ENCODE measurements at regions of chr11 and their contacts with region 1.

Region 1: DNA sequence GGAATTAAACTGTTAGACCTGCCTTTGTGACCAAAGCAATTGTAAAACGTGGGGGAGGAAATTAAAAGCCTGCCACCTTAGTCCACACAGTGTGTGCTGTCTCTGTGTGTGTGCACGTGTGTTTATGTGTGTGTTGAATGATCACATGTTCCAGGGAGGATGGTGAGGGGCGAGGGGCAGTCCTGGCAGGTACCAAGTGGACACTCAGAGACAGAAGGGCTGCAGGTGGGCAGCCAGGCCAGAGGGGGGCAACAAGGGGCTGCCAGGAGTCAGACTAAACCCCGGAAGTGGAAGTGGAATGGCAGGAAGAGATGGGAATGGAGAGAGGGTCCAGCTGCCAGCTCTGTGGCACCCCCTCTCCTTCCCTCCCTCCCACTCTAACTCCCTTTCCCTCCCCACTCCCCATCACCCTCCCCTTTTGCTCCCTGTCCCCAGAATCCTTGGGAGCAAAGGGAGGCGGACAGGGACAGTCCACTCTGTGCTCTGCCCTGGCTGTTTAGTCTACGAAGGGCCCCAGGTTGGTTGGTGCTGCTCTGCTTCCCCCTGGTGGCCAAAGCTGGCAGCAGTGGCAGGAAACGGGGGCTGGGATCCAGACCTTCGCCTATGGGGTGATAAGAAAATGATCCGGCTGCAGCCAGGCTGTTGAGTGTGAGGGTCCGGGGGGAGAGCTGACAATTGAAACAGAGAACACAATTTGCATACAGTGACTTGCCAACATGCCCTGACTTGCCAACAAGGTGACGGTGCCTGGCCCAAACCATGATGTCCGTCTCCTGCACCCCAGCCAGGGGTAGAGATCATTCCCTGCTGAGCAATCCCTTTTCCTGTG is 24.4 kb downstream of the P2RY2 start:
- DNase-seq: peak; percentile 65
- ATAC-seq: peak; percentile 95
- H3K4me3 Mint-ChIP-seq: no peak overlapping the region
- H3K27ac Mint-ChIP-seq: no peak overlapping the region
- H3K4me1 Mint-ChIP-seq: peaks cover 4% of the 10 kb centered on the region
- H3K27me3 Mint-ChIP-seq: peaks cover 5% of the 10 kb centered on the region
- CTCF ChIP-seq: peak; percentile 47

Region 2: DNA sequence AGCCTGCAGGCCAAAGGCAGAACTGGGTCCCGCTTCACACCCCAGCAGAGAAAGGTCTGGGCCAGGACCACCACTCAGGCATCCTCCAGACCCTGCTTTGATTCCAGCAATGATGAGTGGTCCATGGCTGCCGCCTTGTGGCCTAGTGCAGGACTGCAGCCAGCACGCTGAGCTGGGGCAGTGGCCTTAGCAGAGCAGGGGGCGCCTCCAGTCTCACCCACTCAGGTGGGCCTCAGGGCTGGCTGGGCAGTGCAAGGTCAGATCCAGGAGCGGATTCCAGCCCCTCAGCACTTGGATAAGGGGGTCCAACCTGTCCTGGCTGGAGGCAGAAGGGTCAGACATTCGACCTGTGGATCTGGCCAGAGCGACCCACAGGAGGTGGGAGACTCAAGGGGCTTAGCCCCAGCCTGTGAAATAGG is 558.7 kb before region 1 on chr11:
- CTCF ChIA-PET with region 1: no interaction called
- POLR2A ChIA-PET with region 1: no interaction called
- intact Hi-C with region 1: loop called (anchors 1 kb)
- DNase-seq: peak; percentile 70
- ATAC-seq: peak; percentile 79
- H3K4me3 Mint-ChIP-seq: no peak overlapping the region
- H3K27ac Mint-ChIP-seq: no peak overlapping the region
- H3K4me1 Mint-ChIP-seq: peaks cover 1% of the 10 kb centered on the region
- H3K27me3 Mint-ChIP-seq: no peaks in the 10 kb centered on the region
- CTCF ChIP-seq: peak; percentile 49

Region 3: DNA sequence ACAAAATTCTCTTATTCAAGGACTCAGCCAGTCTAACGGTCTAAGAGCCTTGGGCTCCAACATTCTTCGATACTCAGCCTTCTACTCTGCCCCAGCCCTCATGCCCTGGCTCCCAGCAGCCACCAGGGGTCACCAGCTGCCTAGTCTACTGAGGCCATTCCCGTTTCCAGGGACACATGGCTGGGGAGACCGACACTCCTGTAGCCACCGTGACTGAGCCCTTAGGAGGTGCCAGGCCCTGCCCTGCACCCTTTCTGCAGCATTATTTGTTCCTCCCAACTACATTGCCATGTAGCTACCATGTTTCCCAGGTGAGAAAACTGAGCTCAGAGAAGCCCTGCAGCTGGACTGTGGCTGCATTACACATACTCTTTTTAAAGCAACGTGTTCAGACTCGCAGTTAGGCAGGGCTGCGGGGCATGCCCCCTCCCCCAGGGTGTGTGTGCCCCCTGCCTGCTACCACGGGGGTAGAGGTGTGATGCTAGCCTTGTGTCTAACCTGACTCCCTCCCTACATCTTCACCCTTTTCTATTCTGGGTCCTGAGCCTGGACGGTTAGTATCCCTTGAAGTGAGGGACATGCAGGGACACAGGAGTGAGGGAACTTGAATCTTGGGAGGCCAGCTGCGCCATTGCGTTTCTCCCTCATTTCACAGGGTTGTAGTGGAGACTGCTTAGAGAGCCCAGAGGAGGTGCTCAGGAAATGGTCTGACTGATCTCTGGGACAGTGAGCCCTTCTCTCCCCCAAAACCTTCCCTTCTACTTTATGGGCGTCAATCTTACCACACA is 410.8 kb before region 1 on chr11:
- CTCF ChIA-PET with region 1: interaction called, 11 read pairs
- POLR2A ChIA-PET with region 1: no interaction called
- intact Hi-C with region 1: loop called (anchors 1 kb)
- DNase-seq: no peak
- ATAC-seq: peak; percentile 65
- H3K4me3 Mint-ChIP-seq: no peak overlapping the region
- H3K27ac Mint-ChIP-seq: peak overlapping the region; percentile 80
- H3K4me1 Mint-ChIP-seq: peaks cover 24% of the 10 kb centered on the region
- H3K27me3 Mint-ChIP-seq: no peaks in the 10 kb centered on the region
- CTCF ChIP-seq: peak; percentile 30

Region 4: DNA sequence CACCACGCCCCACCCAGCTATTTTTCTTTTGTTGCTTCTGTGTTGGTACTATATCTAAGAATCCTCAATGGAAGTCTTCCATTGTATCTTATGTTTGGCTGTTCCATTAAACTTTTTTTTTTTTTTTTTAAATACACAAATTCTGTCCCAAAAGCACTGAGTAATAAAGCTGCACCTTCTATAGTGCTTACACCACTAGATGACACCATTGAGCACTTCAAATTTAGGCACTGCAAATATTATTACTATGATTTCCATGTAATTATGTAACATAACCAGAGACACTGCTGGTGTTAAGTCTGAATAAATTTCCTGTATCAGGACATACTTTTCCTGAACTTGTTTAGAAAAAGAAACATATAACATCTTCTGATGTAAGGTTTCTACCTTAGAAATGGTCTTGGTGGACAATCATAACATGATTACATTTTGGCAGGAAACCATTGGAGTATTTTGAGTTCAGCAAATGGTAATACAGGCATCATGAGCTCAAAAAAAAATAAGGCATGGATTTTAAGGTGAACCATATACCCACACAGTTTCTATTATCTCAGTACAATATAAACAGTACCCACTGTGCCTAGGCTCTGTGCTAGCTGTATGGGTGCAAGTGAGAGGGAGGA is 317.8 kb before region 1 on chr11:
- CTCF ChIA-PET with region 1: interaction called, 3 read pairs
- POLR2A ChIA-PET with region 1: interaction called, 3 read pairs
- intact Hi-C with region 1: loop called (anchors 2 kb)
- DNase-seq: no peak
- ATAC-seq: peak; percentile 54
- H3K4me3 Mint-ChIP-seq: no peak overlapping the region
- H3K27ac Mint-ChIP-seq: peak overlapping the region; percentile 71
- H3K4me1 Mint-ChIP-seq: peaks cover 32% of the 10 kb centered on the region
- H3K27me3 Mint-ChIP-seq: no peaks in the 10 kb centered on the region
- CTCF ChIP-seq: no peak